ENCODE measurements at regions of chr10 and their contacts with region 1.

Region 1: DNA sequence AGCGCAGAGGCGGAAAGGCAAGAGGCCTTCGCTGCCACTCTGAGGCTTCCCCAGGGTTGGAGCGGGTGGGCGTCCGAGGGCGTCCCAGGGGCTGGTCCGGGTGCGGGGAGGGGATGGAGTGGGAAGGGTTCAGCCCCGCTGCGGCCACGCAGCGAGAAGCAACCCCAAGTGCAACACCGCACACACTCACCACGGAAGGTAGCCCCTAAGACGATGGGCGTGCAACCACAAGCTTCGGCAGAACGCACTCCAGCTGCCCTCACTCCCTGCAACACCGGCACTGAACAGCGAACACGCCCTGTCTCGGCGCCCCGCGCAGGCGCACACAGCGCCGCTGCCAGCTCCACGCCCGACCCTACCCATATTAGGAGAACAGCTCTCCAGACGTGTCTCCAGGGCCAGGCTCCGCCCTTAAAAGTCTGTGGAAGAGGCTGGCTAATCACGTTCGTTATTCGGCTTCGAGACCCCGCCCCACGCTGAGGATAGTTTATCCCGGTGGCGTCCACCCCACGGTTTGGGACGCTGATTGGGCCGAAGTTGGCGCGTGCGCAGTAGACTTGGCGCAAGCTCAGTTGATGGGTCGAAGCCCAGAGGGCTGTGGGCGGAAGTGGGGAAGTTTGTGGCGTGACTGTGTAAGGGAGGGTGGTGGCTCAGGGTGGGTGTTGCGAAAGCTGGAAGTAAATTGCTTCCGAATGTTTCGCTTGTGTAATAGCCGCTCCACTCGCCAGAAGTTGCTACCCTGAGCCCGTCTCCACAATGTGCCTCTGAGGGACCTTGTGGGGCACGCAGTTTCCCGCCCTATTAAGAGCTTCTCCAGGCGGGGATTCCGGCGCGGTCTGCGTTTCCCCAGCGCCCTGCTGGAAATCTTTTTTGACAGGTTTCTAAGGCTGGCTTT is at the start of gene RSU1:
- DNase-seq: peak; percentile 99 to 100 (median 100)
- ATAC-seq: peak; percentile 99
- H3K4me3 ChIP-seq: peak within 1 kb of the TSS; percentile 66
- H3K4me3 Mint-ChIP-seq: peak within 1 kb of the TSS; percentile 88 to 98 (median 93)
- H3K27ac ChIP-seq: peak within 1 kb of the TSS; percentile 79
- H3K27ac Mint-ChIP-seq: peak within 1 kb of the TSS; percentile 84 to 96 (median 94)
- H3K4me1 ChIP-seq: peaks cover 8 to 28% of the 10 kb centered on the region in 2 donors
- H3K4me1 Mint-ChIP-seq: peaks cover 25 to 50% (median 46%) of the 10 kb centered on the region in 7 donors
- H3K27me3 ChIP-seq: no peaks in the 10 kb centered on the region
- H3K27me3 Mint-ChIP-seq: peaks cover 0 to 15% (median 0%) of the 10 kb centered on the region in 5 donors
- total RNA-seq, gene RSU1: 36.1 to 86.7 (median 48.7) TPM

Region 2: GRCh38 chr10:15168781-15169554 is 1648.4 kb before region 1 on chr10:
- CTCF ChIA-PET with region 1: no interaction called
- POLR2A ChIA-PET with region 1: no interaction called
- intact Hi-C with region 1: loop called in 1 of 2 experiments (anchors 2 kb)
- DNase-seq: peak; percentile 84 to 97 (median 91)
- ATAC-seq: peak; percentile 93
- H3K4me3 ChIP-seq: peak overlapping the region; percentile 57
- H3K4me3 Mint-ChIP-seq: peak overlapping the region; percentile 80 to 97 (median 89)
- H3K27ac ChIP-seq: peak overlapping the region; percentile 66
- H3K27ac Mint-ChIP-seq: peak overlapping the region; percentile 91 to 95 (median 95)
- H3K4me1 ChIP-seq: peaks cover 41 to 44% of the 10 kb centered on the region in 2 donors
- H3K4me1 Mint-ChIP-seq: peaks cover 47 to 72% (median 63%) of the 10 kb centered on the region in 7 donors
- H3K27me3 ChIP-seq: no peaks in the 10 kb centered on the region
- H3K27me3 Mint-ChIP-seq: no peaks in the 10 kb centered on the region

Region 3: GRCh38 chr10:16673443-16673842 is 143.9 kb before region 1 on chr10:
- CTCF ChIA-PET with region 1: no interaction called
- POLR2A ChIA-PET with region 1: no interaction called
- intact Hi-C with region 1: no loop called
- DNase-seq: no peak
- ATAC-seq: no peak
- H3K4me3 ChIP-seq: no peak overlapping the region
- H3K4me3 Mint-ChIP-seq: no peak overlapping the region
- H3K27ac ChIP-seq: no peak overlapping the region
- H3K27ac Mint-ChIP-seq: no peak overlapping the region
- H3K4me1 ChIP-seq: no peaks in the 10 kb centered on the region
- H3K4me1 Mint-ChIP-seq: peaks cover 0 to 5% (median 0%) of the 10 kb centered on the region in 7 donors
- H3K27me3 ChIP-seq: no peaks in the 10 kb centered on the region
- H3K27me3 Mint-ChIP-seq: no peaks in the 10 kb centered on the region

Region 4: GRCh38 chr10:16777473-16778370 is 39.6 kb before region 1 on chr10:
- CTCF ChIA-PET with region 1: interaction called, 6 read pairs
- POLR2A ChIA-PET with region 1: interaction called, 3 read pairs
- intact Hi-C with region 1: loop called (anchors 2 to 5 kb)
- DNase-seq: peak in 7 of 9 donors; percentile 26 to 64 (median 56)
- ATAC-seq: peak; percentile 77
- H3K4me3 ChIP-seq: no peak overlapping the region
- H3K4me3 Mint-ChIP-seq: peak overlapping the region in 4 of 10 donors; percentile 14 to 42 (median 21)
- H3K27ac ChIP-seq: no peak overlapping the region
- H3K27ac Mint-ChIP-seq: peak overlapping the region in 8 of 9 donors; percentile 57 to 89 (median 84)
- H3K4me1 ChIP-seq: peaks cover 0 to 11% of the 10 kb centered on the region in 2 donors
- H3K4me1 Mint-ChIP-seq: peaks cover 20 to 40% (median 32%) of the 10 kb centered on the region in 7 donors
- H3K27me3 ChIP-seq: no peaks in the 10 kb centered on the region
- H3K27me3 Mint-ChIP-seq: no peaks in the 10 kb centered on the region

Region 5: GRCh38 chr10:16835228-16835627 is 17.9 kb after region 1 on chr10:
- CTCF ChIA-PET with region 1: interaction called, 4 read pairs
- POLR2A ChIA-PET with region 1: interaction called, 7 read pairs
- intact Hi-C with region 1: loop called in 1 of 2 experiments (anchors 1 kb)
- DNase-seq: peak in 7 of 9 donors; percentile 39 to 68 (median 62)
- ATAC-seq: peak; percentile 92
- H3K4me3 ChIP-seq: peak overlapping the region; percentile 5
- H3K4me3 Mint-ChIP-seq: peak overlapping the region in 9 of 10 donors; percentile 50 to 78 (median 64)
- H3K27ac ChIP-seq: peak overlapping the region; percentile 19
- H3K27ac Mint-ChIP-seq: peak overlapping the region; percentile 16 to 86 (median 63)
- H3K4me1 ChIP-seq: peaks cover 0 to 6% of the 10 kb centered on the region in 2 donors
- H3K4me1 Mint-ChIP-seq: peaks cover 5 to 23% (median 14%) of the 10 kb centered on the region in 7 donors
- H3K27me3 ChIP-seq: no peaks in the 10 kb centered on the region
- H3K27me3 Mint-ChIP-seq: peaks cover 0 to 2% (median 0%) of the 10 kb centered on the region in 5 donors

Region 6: DNA sequence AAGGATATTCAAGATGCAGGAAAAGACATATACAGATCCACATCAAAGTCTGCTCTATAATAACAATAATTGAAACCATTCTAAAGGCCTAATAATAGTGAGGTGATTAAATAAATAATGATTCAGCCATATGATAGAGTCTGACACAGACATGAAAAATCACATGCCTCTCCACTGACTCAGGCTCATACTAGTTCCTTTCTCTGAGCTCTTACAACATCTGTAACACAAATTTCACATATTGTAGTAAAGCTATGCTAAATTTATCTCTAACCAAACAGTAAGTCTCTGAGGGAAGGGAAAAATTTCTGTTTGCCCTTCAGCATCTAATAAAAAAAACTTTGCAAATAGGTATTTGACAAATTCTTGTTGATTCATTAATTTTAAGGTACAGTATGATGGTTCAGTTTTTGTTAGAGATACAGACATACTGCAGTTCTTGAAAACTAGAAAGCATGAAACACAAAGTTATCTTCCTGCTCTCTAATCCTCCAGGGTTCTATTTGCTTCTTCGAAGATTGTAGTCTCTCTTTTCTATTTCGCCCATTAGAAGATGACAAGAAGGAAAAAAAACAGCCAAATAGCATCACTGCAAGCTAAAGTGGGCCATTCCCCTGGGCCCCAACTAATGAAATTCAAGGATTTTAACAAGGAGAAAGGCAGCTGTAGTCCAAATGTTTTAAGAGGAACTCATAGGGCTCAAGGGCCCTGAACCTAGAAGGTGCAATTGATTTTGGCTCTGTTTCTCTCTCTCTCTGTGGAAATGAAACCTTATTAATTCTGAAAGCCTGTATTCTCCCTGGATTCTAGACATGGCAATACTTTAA is 258.4 kb after region 1 on chr10:
- CTCF ChIA-PET with region 1: no interaction called
- POLR2A ChIA-PET with region 1: no interaction called
- intact Hi-C with region 1: no loop called
- DNase-seq: no peak
- ATAC-seq: peak; percentile 69
- H3K4me3 ChIP-seq: no peak overlapping the region
- H3K4me3 Mint-ChIP-seq: no peak overlapping the region
- H3K27ac ChIP-seq: no peak overlapping the region
- H3K27ac Mint-ChIP-seq: peak overlapping the region in 1 of 9 donors; percentile 72
- H3K4me1 ChIP-seq: no peaks in the 10 kb centered on the region
- H3K4me1 Mint-ChIP-seq: peaks cover 0 to 11% (median 5%) of the 10 kb centered on the region in 7 donors
- H3K27me3 ChIP-seq: no peaks in the 10 kb centered on the region
- H3K27me3 Mint-ChIP-seq: peaks cover 0 to 4% (median 0%) of the 10 kb centered on the region in 5 donors

Region 7: DNA sequence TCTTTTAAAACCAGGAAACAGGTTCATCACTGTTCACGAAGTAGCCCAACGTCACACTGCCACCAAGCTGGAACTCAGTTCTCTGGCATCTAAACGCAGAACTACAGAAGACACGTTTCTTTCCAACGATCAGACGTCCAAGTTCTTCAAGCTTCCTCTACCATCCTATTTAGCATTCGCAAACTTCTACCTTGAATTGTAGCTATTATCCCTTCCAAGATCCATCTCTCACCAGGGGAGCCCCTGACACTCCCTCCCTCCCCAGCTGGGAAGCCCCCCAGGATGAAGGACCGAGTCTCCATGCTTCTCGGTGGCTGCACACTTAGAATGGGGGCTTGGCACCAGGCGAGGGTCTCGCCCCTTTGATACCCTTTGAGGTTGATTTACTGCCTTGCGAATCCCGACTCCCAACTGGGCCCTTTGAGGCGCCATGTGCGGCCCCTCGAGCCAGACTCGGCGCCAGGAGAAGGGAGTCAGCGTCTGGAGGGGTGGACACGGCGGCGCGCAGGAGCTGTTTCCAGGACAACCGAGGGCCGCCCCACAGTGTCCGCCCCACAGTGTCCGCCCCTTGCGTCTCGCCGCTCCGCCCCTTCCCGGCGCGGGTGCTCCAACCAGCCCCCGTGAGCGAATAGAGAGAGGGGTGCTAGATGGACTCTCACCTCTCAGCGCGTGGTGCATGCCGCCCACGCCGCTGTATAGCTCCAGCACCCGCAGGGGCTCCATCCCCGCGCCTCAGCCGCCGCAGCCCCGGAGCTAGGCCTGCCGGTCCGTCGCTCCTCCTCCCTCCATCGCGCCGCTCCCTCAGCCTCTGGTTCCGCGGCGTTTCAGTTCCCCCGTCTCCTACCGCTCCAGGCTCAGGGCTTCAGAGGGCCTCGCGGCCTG is 383.8 kb after region 1 on chr10 and contains the start of gene TRDMT1:
- CTCF ChIA-PET with region 1: no interaction called
- POLR2A ChIA-PET with region 1: interaction called, 9 read pairs
- intact Hi-C with region 1: loop called (anchors 1 kb)
- DNase-seq: peak; percentile 60 to 82 (median 74)
- ATAC-seq: peak; percentile 89
- H3K4me3 ChIP-seq: peak within 1 kb of the TSS; percentile 94
- H3K4me3 Mint-ChIP-seq: peak within 1 kb of the TSS; percentile 86 to 99 (median 94)
- H3K27ac ChIP-seq: peak within 1 kb of the TSS; percentile 90
- H3K27ac Mint-ChIP-seq: peak within 1 kb of the TSS; percentile 90 to 99 (median 96)
- H3K4me1 ChIP-seq: peaks cover 9 to 15% of the 10 kb centered on the region in 2 donors
- H3K4me1 Mint-ChIP-seq: peaks cover 25 to 67% (median 51%) of the 10 kb centered on the region in 7 donors
- H3K27me3 ChIP-seq: no peaks in the 10 kb centered on the region
- H3K27me3 Mint-ChIP-seq: peaks cover 0 to 4% (median 0%) of the 10 kb centered on the region in 5 donors
- total RNA-seq, gene TRDMT1: 10.2 to 30.6 (median 15.9) TPM

Region 8: DNA sequence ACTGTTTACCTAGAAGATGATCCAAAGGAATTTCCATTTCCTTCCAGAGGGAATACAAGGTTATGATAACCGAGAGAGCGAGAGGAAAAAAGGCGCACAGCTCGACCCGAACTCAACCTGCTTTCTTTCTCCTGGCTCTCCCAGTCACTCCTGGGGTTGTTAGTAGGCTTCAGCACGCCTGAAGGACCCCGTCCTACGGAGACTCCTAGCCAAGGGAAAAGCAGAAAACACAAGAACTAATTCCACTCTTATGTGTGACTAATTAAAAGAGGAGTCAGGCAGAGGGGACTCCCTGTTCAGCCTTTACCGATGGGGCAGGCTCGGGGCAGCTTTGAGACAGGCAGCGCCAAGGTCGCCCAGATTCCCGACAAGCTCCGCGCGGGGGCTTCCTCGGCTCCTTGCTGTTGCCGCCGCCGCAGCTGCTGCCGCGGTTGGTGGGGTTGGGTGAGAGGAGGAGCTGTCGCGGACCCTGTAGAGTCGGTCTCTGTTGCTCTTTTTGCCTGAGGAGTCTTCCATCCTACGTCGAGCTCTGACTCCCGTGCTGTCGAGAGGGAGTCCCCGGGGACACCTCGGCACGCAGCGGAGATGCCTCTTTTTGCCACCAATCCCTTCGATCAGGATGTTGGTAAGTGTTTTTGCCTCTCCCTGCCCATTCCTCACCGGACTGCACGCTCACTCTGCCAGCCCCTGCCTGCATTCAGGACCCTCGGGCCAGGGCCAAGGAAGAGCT is 826.5 kb after region 1 on chr10 and contains the start of gene STAM:
- CTCF ChIA-PET with region 1: no interaction called
- POLR2A ChIA-PET with region 1: interaction called, 13 read pairs
- intact Hi-C with region 1: loop called (anchors 1 kb)
- DNase-seq: peak; percentile 88 to 99 (median 94)
- ATAC-seq: peak; percentile 95
- H3K4me3 ChIP-seq: peak within 1 kb of the TSS; percentile 92
- H3K4me3 Mint-ChIP-seq: peak within 1 kb of the TSS; percentile 95 to 99 (median 98)
- H3K27ac ChIP-seq: peak within 1 kb of the TSS; percentile 96
- H3K27ac Mint-ChIP-seq: peak within 1 kb of the TSS; percentile 100
- H3K4me1 ChIP-seq: peaks cover 17 to 35% of the 10 kb centered on the region in 2 donors
- H3K4me1 Mint-ChIP-seq: peaks cover 33 to 71% (median 57%) of the 10 kb centered on the region in 7 donors
- H3K27me3 ChIP-seq: no peaks in the 10 kb centered on the region
- H3K27me3 Mint-ChIP-seq: peaks cover 0 to 3% (median 0%) of the 10 kb centered on the region in 5 donors
- total RNA-seq, gene STAM: 18.3 to 25.4 (median 19.6) TPM

Measured in naive thymus-derived CD4-positive, alpha-beta T cell (primary cell).